ENCODE measurements at regions of chr1 and their contacts with region 1.

Region 1: DNA sequence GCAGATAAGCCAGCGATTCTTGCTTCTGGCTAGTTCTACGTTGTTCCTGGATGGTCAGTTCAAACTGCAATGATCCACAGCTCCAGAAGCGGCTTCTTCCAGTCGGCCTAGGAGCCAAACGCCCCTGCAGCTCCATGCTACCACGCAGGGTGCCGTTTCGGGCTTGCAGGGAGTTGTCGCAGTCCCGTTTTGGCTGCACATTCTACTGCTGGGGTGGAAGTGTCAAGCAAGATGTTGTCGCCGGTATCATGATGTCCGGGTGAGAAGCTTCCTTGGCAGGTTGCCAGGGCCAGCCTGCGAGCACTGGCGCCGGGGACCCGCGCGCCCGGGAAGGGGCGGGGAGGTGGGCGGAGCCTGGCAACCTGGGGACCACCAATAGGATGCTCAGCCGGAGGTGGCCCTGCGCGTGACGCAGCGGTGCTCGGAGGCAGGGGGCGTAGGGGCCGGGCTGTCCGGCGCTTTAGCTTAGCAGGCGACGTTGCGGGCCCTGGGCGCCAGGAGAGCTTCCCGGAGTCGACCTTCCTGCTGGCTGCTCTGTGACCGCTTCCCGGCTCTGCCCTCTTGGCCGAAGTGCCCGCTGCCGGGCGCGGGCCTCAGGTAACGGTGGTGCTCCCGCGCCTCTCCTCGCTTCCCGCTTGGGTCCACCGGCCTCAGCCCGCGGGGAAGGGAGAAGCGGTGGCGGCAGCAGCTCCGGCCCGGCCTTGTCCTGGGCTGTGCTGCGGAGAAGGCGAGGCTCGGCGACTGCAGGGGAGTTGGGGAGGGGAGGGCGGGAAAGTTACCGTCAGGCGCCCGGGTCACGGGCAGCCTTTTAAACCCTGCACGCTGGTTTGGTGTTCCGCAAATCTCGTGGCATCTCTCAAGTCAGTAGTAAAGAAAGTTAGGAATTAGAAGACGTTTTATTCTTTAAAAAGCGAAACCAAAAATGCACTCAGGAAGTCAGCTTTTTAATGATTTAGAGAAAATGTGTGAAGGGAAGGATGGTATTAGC is at the start of gene SOAT1:
- DNase-seq: peak; percentile 98
- H3K4me3 Mint-ChIP-seq: peak within 1 kb of the TSS; percentile 89
- H3K27ac Mint-ChIP-seq: peak within 1 kb of the TSS; percentile 83
- H3K4me1 Mint-ChIP-seq: peaks cover 33% of the 10 kb centered on the region
- H3K27me3 Mint-ChIP-seq: no peaks in the 10 kb centered on the region
- total RNA-seq, gene SOAT1: 52.2 and 54.4 TPM in 2 replicates

Region 2: GRCh38 chr1:178725603-178726517 is 567.8 kb before region 1 on chr1:
- intact Hi-C with region 1: loop called (anchors 5 kb)
- DNase-seq: peak; percentile 87
- H3K4me3 Mint-ChIP-seq: peak overlapping the region; percentile 86
- H3K27ac Mint-ChIP-seq: peak overlapping the region; percentile 72
- H3K4me1 Mint-ChIP-seq: peaks cover 9% of the 10 kb centered on the region
- H3K27me3 Mint-ChIP-seq: peaks cover 15% of the 10 kb centered on the region

Region 3: GRCh38 chr1:179025125-179025974 is 268.3 kb before region 1 on chr1 and contains the start of gene FAM20B:
- intact Hi-C with region 1: loop called (anchors 2 kb)
- DNase-seq: peak; percentile 97
- H3K4me3 Mint-ChIP-seq: peak within 1 kb of the TSS; percentile 89
- H3K27ac Mint-ChIP-seq: peak within 1 kb of the TSS; percentile 86
- H3K4me1 Mint-ChIP-seq: peaks cover 37% of the 10 kb centered on the region
- H3K27me3 Mint-ChIP-seq: peaks cover 17% of the 10 kb centered on the region
- total RNA-seq, gene FAM20B: 40.4 and 45.2 TPM in 2 replicates

Region 4: DNA sequence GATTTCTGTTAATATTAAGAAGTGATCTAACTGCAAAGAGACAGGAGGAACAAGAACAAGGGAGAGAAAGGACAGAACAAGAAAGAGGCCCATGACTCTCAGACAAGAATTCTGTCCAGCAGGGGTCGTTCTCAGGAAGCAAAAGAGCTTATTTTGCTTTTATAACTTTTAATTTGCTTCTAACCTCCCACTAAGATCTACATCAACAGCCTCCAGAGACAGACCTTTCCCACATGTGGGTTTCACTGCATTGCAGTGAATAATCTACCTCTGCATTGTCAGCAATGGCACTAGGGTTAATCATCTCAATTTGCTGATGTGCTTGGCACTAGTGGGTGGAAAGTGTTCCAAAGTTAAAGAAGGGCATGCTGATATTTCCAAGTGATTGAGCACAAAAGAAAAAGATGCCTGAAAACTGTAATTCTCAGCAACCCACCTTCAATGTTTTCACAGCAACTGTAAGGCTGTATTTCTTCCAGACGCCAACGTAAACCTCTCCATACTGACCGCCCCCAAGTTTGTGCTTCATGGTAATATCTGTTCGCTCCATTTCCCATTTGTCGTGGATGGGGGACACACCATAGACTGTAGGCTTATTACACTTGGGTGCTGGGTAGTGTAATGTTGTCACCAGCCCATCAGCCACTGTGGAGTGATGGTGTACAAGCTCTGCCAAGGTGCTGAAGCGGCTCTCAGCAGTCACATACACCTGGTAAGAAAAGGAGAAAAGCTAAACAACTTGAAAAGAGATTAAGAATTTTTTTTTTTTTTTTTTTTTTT is 172.3 kb before region 1 on chr1:
- intact Hi-C with region 1: loop called (anchors 2 kb)
- DNase-seq: peak; percentile 83
- H3K4me3 Mint-ChIP-seq: no peak overlapping the region
- H3K27ac Mint-ChIP-seq: no peak overlapping the region
- H3K4me1 Mint-ChIP-seq: peaks cover 6% of the 10 kb centered on the region
- H3K27me3 Mint-ChIP-seq: no peaks in the 10 kb centered on the region

Region 5: DNA sequence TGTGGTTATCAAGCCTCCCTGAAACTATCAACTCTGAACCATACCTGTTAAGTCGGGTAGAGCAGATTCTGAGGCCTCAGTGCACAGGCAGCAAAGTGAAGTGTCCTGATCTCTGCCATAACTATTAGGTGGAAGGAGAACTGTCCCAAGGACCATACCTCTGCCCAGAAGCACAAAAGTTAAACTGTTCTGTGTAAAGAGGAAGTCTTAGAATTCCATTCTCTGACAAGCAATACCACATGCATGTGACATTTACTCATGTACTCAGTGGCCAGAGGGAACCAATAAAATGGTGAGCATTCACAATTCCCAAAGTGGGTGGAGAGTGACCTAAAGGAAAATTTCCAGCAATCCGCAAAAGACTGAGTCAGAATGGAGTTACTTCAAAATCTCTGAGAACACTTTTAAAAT is 150.7 kb before region 1 on chr1:
- intact Hi-C with region 1: loop called (anchors 5 kb)
- DNase-seq: no peak
- H3K4me3 Mint-ChIP-seq: peak overlapping the region; percentile 63
- H3K27ac Mint-ChIP-seq: peak overlapping the region; percentile 81
- H3K4me1 Mint-ChIP-seq: peaks cover 30% of the 10 kb centered on the region
- H3K27me3 Mint-ChIP-seq: no peaks in the 10 kb centered on the region

Region 6: GRCh38 chr1:179229214-179230140 is 64.2 kb before region 1 on chr1 and contains the start of gene ABL2:
- intact Hi-C with region 1: loop called (anchors 2 kb)
- DNase-seq: peak; percentile 88
- H3K4me3 Mint-ChIP-seq: peak within 1 kb of the TSS; percentile 90
- H3K27ac Mint-ChIP-seq: peak within 1 kb of the TSS; percentile 89
- H3K4me1 Mint-ChIP-seq: peaks cover 24% of the 10 kb centered on the region
- H3K27me3 Mint-ChIP-seq: peaks cover 4% of the 10 kb centered on the region
- total RNA-seq, gene ABL2: 9.9 and 11.1 TPM in 2 replicates

Measured in activated CD4-positive, alpha-beta T cell treated with anti-CD3 and anti-CD28 coated beads, Interleukin-2, amount 10 ng/mL, durations not matched to agents 24 days and 14 days (primary cell).